ENCODE measurements at regions of chr20 and their contacts with region 1.

Region 1: GRCh38 chr20:3407771-3408637 is 535 bp upstream of the DNAAF9 start:
- DNase-seq: peak; percentile 40 to 87 (median 69)
- ATAC-seq: peak; percentile 67
- H3K4me3 ChIP-seq: peak overlapping the region; percentile 74 to 86
- H3K4me3 Mint-ChIP-seq: peak overlapping the region; percentile 99
- H3K27ac ChIP-seq: peak overlapping the region; percentile 53 to 59
- H3K27ac Mint-ChIP-seq: peak overlapping the region; percentile 94
- H3K4me1 ChIP-seq: peaks cover 6% of the 10 kb centered on the region
- H3K4me1 Mint-ChIP-seq: peaks cover 25% of the 10 kb centered on the region
- H3K27me3 ChIP-seq: peaks cover 0 to 1% of the 10 kb centered on the region in 2 experiments
- H3K27me3 Mint-ChIP-seq: no peaks in the 10 kb centered on the region
- CTCF ChIP-seq: no peak

Region 2: GRCh38 chr20:2523919-2524708 is 883.9 kb before region 1 on chr20:
- CTCF ChIA-PET with region 1: no interaction called
- POLR2A ChIA-PET with region 1: no interaction called
- intact Hi-C with region 1: loop called in 1 of 2 experiments (anchors 10 kb)
- DNase-seq: peak; percentile 86 to 97 (median 91)
- ATAC-seq: peak; percentile 84
- H3K4me3 ChIP-seq: peak overlapping the region; percentile 90 to 91
- H3K4me3 Mint-ChIP-seq: peak overlapping the region; percentile 89
- H3K27ac ChIP-seq: peak overlapping the region; percentile 47 to 58
- H3K27ac Mint-ChIP-seq: peak overlapping the region; percentile 60
- H3K4me1 ChIP-seq: peaks cover 10% of the 10 kb centered on the region
- H3K4me1 Mint-ChIP-seq: peaks cover 12% of the 10 kb centered on the region
- H3K27me3 ChIP-seq: no peaks in the 10 kb centered on the region
- H3K27me3 Mint-ChIP-seq: no peaks in the 10 kb centered on the region
- CTCF ChIP-seq: peak; percentile 92

Region 3: DNA sequence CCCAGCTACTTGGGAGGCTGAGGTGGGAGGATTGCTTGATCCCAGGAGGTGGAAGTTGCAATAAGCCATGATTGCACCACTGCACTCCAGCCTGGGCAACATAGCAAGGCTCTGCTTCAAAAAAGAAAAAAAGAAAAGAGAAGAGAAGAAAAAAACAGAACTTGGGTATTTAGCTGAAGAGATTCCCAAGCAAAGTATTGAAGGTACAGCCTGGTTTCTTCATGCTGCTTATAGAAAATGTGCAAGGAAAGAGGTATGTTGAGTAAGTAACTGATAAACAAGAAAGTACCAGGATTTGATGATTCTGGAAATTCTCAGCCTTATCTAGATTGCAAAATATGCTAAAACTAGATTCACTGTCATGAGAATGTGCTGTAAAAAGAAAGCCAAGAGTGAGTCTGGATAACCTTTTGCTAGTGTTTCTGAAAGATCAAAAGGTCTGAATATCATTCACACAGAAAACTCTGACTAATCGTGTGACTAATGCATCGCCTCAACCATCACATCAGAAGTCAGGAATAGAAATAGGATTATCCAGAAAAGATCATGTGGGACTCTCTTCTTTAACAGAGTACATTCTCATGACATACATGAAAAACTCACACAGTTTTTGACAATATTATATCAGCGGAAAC is 787.9 kb before region 1 on chr20:
- CTCF ChIA-PET with region 1: no interaction called
- POLR2A ChIA-PET with region 1: no interaction called
- intact Hi-C with region 1: no loop called
- DNase-seq: no peak
- ATAC-seq: no peak
- H3K4me3 ChIP-seq: no peak overlapping the region
- H3K4me3 Mint-ChIP-seq: no peak overlapping the region
- H3K27ac ChIP-seq: no peak overlapping the region
- H3K27ac Mint-ChIP-seq: no peak overlapping the region
- H3K4me1 ChIP-seq: no peaks in the 10 kb centered on the region
- H3K4me1 Mint-ChIP-seq: no peaks in the 10 kb centered on the region
- H3K27me3 ChIP-seq: peaks cover 0 to 3% of the 10 kb centered on the region in 2 experiments
- H3K27me3 Mint-ChIP-seq: peaks cover 40% of the 10 kb centered on the region
- CTCF ChIP-seq: no peak

Region 4: DNA sequence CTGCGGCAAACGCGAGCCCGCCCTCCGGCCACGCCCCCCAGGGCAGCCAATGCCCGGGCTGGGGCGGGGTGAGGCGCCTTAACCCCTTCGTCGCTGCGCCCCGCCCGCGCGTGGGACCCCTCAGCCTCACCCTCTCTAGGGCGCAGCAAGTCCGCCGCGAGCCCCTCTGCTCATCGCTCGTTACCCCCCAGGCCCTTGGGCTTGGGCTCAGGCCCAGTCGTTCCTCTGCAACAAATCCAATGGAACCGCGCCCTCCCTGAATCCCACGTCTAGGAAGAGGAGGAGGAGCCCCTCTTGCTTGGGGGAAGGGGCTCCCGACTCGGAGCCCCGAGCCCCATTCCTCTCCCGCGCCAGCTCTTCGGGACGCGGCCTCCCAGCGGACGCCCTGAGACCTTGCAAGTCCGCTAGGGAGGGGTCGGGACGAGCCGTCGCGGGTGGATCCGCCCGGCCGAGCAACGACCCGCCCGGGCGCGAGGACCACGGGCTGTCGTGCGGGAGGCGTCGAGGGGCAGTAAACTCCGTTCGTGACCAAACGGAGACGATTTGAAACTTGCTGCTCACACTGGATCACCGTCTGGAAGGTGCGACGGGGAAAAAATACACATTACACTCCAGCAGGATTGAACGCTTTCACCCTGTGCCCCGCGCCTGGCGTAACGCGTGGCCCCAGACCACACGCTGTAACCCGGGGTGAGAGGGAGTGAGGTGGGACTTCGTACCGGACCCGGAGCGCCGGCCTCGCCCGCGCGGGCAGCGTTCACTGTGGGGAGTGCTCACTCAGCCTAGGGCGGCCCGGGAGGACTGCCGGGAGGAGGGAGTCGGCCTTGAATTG is 234.2 kb before region 1 on chr20:
- CTCF ChIA-PET with region 1: no interaction called
- POLR2A ChIA-PET with region 1: no interaction called
- intact Hi-C with region 1: loop called in 1 of 2 experiments (anchors 1 kb)
- DNase-seq: peak; percentile 45 to 95 (median 90)
- ATAC-seq: peak; percentile 10
- H3K4me3 ChIP-seq: peak overlapping the region; percentile 81 to 96
- H3K4me3 Mint-ChIP-seq: peak overlapping the region; percentile 82
- H3K27ac ChIP-seq: peak overlapping the region in 1 of 2 experiments; percentile 97
- H3K27ac Mint-ChIP-seq: peak overlapping the region; percentile 62
- H3K4me1 ChIP-seq: peaks cover 13% of the 10 kb centered on the region
- H3K4me1 Mint-ChIP-seq: peaks cover 17% of the 10 kb centered on the region
- H3K27me3 ChIP-seq: peaks cover 0 to 7% of the 10 kb centered on the region in 2 experiments
- H3K27me3 Mint-ChIP-seq: peaks cover 10% of the 10 kb centered on the region
- CTCF ChIP-seq: no peak

Region 5: DNA sequence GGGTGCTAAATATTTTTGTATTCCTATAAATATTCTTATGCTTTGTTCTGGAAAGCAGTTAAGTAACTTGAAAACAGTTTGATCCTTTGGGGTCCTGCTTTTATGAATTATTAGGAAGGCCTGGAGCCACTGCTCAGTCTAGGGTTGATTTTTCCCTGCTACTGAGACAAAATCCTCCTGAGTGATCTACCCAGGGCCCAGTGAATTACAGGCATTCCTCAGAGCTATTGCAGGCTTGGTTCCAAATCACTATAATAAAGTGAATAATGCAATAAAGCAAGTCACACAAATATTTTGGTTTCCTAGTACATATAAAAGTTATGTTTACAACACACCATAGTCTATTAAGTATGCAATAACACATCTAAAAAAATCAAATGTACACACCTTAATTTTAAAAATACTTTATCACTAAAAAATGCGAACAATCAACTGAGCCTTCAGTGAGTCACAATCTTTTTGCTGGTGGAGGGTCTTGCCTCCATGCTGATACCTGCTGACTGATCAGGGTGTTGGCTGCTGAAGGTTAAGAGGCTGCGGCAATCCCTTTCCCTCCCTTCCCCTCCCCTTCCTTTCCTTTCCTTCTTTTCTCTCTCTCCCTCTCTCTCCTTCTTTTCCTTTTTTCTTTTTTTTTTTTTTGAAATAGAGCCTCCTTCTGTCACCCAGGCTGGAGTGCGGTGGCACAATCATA is 43.5 kb before region 1 on chr20:
- CTCF ChIA-PET with region 1: no interaction called
- POLR2A ChIA-PET with region 1: no interaction called
- intact Hi-C with region 1: no loop called
- DNase-seq: no peak
- ATAC-seq: no peak
- H3K4me3 ChIP-seq: no peak overlapping the region
- H3K4me3 Mint-ChIP-seq: no peak overlapping the region
- H3K27ac ChIP-seq: no peak overlapping the region
- H3K27ac Mint-ChIP-seq: no peak overlapping the region
- H3K4me1 ChIP-seq: no peaks in the 10 kb centered on the region
- H3K4me1 Mint-ChIP-seq: no peaks in the 10 kb centered on the region
- H3K27me3 ChIP-seq: no peaks in the 10 kb centered on the region
- H3K27me3 Mint-ChIP-seq: no peaks in the 10 kb centered on the region
- CTCF ChIP-seq: no peak

Region 6: DNA sequence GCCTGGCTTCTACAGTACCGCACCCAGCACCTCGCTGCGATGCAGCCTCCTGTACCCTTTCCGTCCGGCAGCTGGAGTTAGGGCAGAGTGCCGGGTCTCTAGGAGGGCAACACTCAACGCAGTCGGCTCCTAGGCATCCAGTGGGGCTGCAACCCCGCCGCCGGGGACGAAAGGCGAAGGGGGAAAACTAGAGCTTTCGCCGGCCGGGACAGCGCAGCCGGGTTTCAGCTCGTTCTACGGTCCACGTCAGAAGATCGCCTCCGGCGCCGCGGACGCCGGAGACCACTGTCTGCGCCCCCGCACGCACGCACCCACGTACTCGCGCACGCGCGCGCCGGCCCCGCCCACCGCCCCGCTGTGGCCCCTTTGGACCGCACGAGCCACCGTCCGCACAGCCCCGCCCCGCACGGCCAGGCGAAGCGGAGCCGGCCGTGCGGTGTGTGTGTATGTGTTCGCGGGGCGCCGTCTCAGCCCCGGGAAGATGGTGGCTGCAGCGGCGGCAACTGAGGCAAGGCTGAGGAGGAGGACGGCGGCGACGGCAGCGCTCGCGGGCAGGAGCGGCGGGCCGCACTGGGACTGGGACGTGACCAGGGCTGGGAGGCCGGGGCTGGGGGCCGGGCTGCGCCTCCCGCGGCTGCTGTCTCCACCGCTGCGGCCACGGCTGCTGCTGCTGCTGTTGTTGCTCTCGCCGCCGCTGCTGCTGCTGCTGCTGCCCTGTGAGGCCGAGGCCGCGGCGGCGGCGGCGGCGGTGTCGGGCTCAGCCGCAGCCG is 62.8 kb after region 1 on chr20 and contains the start of gene ATRN:
- CTCF ChIA-PET with region 1: interaction called, 12 read pairs
- POLR2A ChIA-PET with region 1: interaction called, 12 read pairs
- intact Hi-C with region 1: loop called (anchors 1 kb)
- DNase-seq: peak; percentile 70 to 94 (median 89)
- ATAC-seq: peak; percentile 92
- H3K4me3 ChIP-seq: peak within 1 kb of the TSS; percentile 68 to 86
- H3K4me3 Mint-ChIP-seq: peak within 1 kb of the TSS; percentile 92
- H3K27ac ChIP-seq: peak within 1 kb of the TSS; percentile 47 to 72
- H3K27ac Mint-ChIP-seq: peak within 1 kb of the TSS; percentile 83
- H3K4me1 ChIP-seq: peaks cover 33% of the 10 kb centered on the region
- H3K4me1 Mint-ChIP-seq: peaks cover 35% of the 10 kb centered on the region
- H3K27me3 ChIP-seq: no peaks in the 10 kb centered on the region
- H3K27me3 Mint-ChIP-seq: no peaks in the 10 kb centered on the region
- CTCF ChIP-seq: no peak
- total RNA-seq, gene ATRN: 8.4 to 8.7 TPM

Region 7: DNA sequence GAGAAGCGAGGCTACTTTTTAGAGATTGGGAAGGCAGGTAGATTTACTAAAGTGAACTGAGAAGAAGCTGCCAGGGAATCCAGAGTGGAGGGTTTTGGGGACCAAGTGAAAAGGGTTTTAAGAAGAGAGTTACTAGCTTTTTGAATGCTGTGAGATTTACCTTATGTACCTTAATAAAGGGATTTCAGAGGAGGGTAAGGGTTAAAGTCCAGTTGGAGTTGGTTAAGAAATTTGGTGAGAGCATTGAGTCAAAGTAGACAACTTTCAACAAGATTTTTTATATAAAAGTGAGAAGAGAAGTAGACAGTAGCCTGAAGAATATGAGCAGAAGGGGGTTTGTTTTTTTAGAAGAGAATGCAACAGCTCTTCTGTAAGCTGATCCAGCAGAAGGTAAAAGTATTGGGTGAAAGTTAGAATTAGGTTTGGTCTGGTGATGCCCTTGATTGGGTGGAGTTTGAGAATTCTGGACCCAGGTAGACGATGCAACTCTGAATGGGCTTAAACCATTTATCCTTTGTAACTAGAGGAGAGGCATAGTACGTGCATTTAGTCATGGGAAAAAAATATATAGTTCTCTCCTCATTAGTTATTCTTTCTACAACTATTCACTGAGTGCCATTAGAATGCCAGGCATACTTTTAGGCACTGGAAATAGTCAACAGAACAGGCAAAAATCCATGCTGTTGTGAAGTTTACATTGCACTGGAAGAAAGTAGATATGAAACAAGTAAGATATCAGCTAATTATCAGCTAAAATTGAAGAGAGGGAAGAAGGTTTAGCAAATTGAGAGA is 107.6 kb after region 1 on chr20:
- CTCF ChIA-PET with region 1: no interaction called
- POLR2A ChIA-PET with region 1: no interaction called
- intact Hi-C with region 1: no loop called
- DNase-seq: no peak
- ATAC-seq: no peak
- H3K4me3 ChIP-seq: no peak overlapping the region
- H3K4me3 Mint-ChIP-seq: no peak overlapping the region
- H3K27ac ChIP-seq: no peak overlapping the region
- H3K27ac Mint-ChIP-seq: no peak overlapping the region
- H3K4me1 ChIP-seq: no peaks in the 10 kb centered on the region
- H3K4me1 Mint-ChIP-seq: no peaks in the 10 kb centered on the region
- H3K27me3 ChIP-seq: no peaks in the 10 kb centered on the region
- H3K27me3 Mint-ChIP-seq: no peaks in the 10 kb centered on the region
- CTCF ChIP-seq: no peak

Region 8: DNA sequence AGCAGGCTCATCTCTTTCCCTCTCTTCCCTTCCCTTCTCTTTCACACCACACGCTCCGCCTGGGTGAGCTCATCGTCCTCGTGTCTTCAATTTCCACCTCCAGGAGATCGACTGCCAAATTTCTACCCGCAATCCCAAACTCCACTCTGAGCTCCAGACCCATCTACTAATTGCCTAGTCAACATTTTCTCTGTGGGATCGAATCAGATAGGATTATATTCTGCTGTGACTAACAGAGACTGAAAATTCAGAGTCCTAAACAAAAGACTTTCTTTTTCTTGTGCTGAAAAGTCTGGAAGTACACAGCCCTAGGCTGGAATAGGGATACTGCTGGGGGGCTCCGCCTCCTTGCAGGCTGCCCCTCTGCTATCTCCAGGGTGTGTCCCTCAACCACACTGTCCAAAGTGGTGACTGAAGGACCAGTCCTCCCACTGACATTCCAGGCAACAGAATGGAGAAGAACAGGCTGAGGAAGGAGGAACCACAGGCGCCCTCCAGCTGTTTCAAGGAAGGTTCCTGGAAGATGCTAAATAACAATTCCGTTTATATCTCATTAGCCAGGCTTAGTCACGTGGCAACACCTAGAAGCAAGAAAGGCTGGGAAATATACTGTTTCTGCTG is 319.5 kb after region 1 on chr20:
- CTCF ChIA-PET with region 1: no interaction called
- POLR2A ChIA-PET with region 1: no interaction called
- intact Hi-C with region 1: no loop called
- DNase-seq: no peak
- ATAC-seq: no peak
- H3K4me3 ChIP-seq: no peak overlapping the region
- H3K4me3 Mint-ChIP-seq: no peak overlapping the region
- H3K27ac ChIP-seq: no peak overlapping the region
- H3K27ac Mint-ChIP-seq: no peak overlapping the region
- H3K4me1 ChIP-seq: no peaks in the 10 kb centered on the region
- H3K4me1 Mint-ChIP-seq: peaks cover 3% of the 10 kb centered on the region
- H3K27me3 ChIP-seq: peaks cover 6 to 9% of the 10 kb centered on the region in 2 experiments
- H3K27me3 Mint-ChIP-seq: peaks cover 42% of the 10 kb centered on the region
- CTCF ChIP-seq: no peak